Mammary epithelial cell (primary cell): ENCODE measurements at regions of chr17 and their contacts with region 1.

Region 1: DNA sequence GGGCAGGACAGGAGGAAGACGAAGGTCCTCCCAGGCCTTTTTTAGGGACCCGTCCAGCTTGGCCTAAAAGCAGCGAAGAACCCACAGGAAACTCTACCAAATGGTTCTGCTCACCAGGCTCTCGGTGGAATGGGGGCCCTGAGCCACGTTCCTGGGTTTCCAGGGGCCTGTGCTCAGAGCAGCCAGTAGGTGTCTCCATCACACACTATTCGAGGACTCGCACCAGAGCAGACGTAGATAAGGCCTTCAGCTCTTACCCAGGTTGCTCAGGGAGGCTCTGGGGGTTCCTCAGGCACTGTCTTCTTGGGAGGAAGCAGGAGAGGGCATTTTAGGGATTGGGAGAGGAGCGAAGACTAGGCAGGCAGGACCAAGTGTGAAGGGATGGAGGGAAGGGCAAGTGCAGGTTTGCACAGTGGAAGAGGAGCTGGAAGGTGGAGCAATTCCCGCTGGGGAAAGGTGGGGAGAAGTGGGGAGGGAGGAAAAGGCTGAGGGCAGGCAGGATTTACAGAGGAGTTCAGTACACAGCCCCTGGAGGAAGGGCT is 157.1 kb downstream of the RGS9 start:
- DNase-seq: peak; percentile 28
- H3K4me3 ChIP-seq: no peak overlapping the region
- H3K27ac ChIP-seq: no peak overlapping the region
- H3K4me1 ChIP-seq: no peaks in the 10 kb centered on the region
- H3K27me3 ChIP-seq: no peaks in the 10 kb centered on the region
- CTCF ChIP-seq: peak; percentile 65 to 91

Region 2: GRCh38 chr17:65556014-65556909 is 262.0 kb after region 1 on chr17:
- CTCF ChIA-PET with region 1: no interaction called
- dilution Hi-C with region 1: no loop called
- in situ Hi-C with region 1: no loop called
- intact Hi-C with region 1: loop called (anchors 1 kb)
- DNase-seq: peak; percentile 24
- H3K4me3 ChIP-seq: no peak overlapping the region
- H3K27ac ChIP-seq: no peak overlapping the region
- H3K4me1 ChIP-seq: peaks cover 10% of the 10 kb centered on the region
- H3K27me3 ChIP-seq: peaks cover 21% of the 10 kb centered on the region
- CTCF ChIP-seq: peak; percentile 67

Region 3: DNA sequence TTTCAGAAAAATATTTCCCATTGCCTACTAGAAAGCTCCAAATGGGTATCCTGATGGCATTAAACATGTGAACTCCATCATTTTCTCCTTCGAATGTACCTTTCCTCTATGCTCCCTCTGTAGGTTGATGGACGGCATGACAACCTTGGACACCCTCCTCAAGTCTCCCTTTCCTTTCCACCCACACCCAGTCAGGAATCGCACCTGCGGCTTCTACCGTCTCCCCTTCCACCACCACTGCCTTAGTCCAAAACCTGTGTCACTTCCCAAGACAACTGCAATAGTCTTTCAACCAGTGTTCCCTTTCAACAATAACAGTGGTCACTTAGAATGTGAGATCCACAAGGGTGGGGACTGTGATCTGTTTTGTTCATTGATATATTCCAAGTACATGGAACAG is 500.3 kb after region 1 on chr17:
- CTCF ChIA-PET with region 1: no interaction called
- dilution Hi-C with region 1: no loop called
- in situ Hi-C with region 1: no loop called
- intact Hi-C with region 1: loop called (anchors 1 kb)
- DNase-seq: peak; percentile 29
- H3K4me3 ChIP-seq: no peak overlapping the region
- H3K27ac ChIP-seq: no peak overlapping the region
- H3K4me1 ChIP-seq: no peaks in the 10 kb centered on the region
- H3K27me3 ChIP-seq: no peaks in the 10 kb centered on the region
- CTCF ChIP-seq: peak; percentile 46 to 75

Region 4: DNA sequence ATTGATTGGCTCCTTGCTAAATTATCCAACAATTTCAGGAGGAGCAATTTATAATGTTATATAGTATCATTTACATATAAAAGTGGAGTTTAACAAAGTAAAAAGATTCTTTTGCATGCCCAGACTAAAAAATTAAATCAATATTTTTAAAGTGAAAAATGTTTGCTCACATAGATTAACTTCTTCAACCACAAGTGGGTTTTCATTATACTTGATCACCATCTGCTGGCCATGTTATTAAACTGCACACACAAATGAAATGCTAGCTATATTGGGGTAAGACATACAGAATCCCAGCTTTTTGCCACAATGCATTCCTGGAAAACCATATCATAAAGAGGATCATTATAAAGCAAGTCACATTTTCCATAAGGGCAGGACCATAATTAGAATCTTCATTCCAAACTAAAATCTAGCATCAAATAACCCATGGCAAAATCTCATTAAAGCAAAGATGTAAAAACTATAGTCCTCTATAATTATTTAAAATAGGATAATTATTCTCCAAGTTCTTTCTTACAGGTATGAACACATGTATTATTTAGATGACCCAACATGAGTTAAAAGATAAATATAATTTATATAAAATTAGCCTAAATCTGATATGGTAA is 871.4 kb after region 1 on chr17:
- CTCF ChIA-PET with region 1: no interaction called
- dilution Hi-C with region 1: no loop called
- in situ Hi-C with region 1: no loop called
- intact Hi-C with region 1: loop called (anchors 1 kb)
- DNase-seq: peak; percentile 33
- H3K4me3 ChIP-seq: no peak overlapping the region
- H3K27ac ChIP-seq: no peak overlapping the region
- H3K4me1 ChIP-seq: no peaks in the 10 kb centered on the region
- H3K27me3 ChIP-seq: no peaks in the 10 kb centered on the region
- CTCF ChIP-seq: peak; percentile 62 to 64